Heart left ventricle (tissue), 16 donors: ENCODE measurements at regions of chr15 and their contacts with region 1.

Region 1: GRCh38 chr15:34490417-34491193 is 53.0 kb upstream of the GOLGA8A start:
- DNase-seq: no peak
- ATAC-seq: no peak
- H3K4me3 ChIP-seq: no peak overlapping the region
- H3K27ac ChIP-seq: no peak overlapping the region
- H3K4me1 ChIP-seq: peaks cover 0 to 15% (median 0%) of the 10 kb centered on the region in 12 donors
- H3K27me3 ChIP-seq: peaks cover 0 to 58% (median 16%) of the 10 kb centered on the region in 9 donors
- CTCF ChIP-seq: no peak
- POLR2A ChIP-seq: no peak

Region 2: GRCh38 chr15:34367101-34368081 is 123.2 kb before region 1 on chr15 and contains the start of gene LPCAT4:
- intact Hi-C with region 1: no loop called
- DNase-seq: peak; percentile 89 to 94 (median 92)
- ATAC-seq: peak; percentile 82 to 96 (median 90)
- H3K4me3 ChIP-seq: peak within 1 kb of the TSS; percentile 62 to 99 (median 88)
- H3K27ac ChIP-seq: peak within 1 kb of the TSS; percentile 91 to 100 (median 98)
- H3K4me1 ChIP-seq: peaks cover 0 to 25% (median 15%) of the 10 kb centered on the region in 12 donors
- H3K27me3 ChIP-seq: no peaks in the 10 kb centered on the region
- CTCF ChIP-seq: peak; percentile 86 to 99 (median 96)
- POLR2A ChIP-seq: peak in 1 of 2 donors; percentile 75
- total RNA-seq, gene LPCAT4: 9.8 to 80.0 (median 44.8) TPM

Region 3: GRCh38 chr15:34437687-34438086 is 52.9 kb before region 1 on chr15 and contains the start of gene GOLGA8A:
- intact Hi-C with region 1: loop called in 1 of 10 experiments (anchors 10 kb)
- DNase-seq: peak; percentile 60 to 89 (median 71)
- ATAC-seq: peak in 3 of 4 donors; percentile 66 to 75 (median 73)
- H3K4me3 ChIP-seq: peak within 1 kb of the TSS; percentile 44 to 89 (median 62)
- H3K27ac ChIP-seq: peak within 1 kb of the TSS in 5 of 12 donors; percentile 6 to 45 (median 30)
- H3K4me1 ChIP-seq: peaks cover 0 to 20% (median 4%) of the 10 kb centered on the region in 12 donors
- H3K27me3 ChIP-seq: peaks cover 0 to 9% (median 0%) of the 10 kb centered on the region in 9 donors
- CTCF ChIP-seq: no peak
- POLR2A ChIP-seq: no peak
- total RNA-seq, gene GOLGA8A: 1.1 to 21.6 (median 8.9) TPM

Region 4: DNA sequence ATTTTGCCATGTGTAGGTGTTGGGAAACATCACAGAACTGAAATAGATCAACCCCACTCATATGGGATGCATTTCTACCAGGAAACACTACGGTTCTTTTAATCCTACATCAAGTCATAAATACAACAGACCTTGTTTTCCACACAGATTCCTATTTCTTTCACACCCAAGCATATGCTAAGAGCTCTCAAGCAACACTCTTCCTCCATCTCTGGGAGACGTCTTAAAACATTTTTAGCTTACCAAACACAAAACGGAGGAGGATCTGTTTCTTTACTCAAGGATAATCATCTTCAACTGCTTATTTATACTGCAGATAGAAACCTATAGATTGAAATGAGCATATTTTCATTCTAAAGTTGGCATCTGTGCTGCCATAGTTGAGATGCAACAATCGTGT is 259.1 kb after region 1 on chr15:
- intact Hi-C with region 1: no loop called
- DNase-seq: no peak
- ATAC-seq: no peak
- H3K4me3 ChIP-seq: no peak overlapping the region
- H3K27ac ChIP-seq: no peak overlapping the region
- H3K4me1 ChIP-seq: peaks cover 0 to 8% (median 0%) of the 10 kb centered on the region in 12 donors
- H3K27me3 ChIP-seq: peaks cover 0 to 28% (median 13%) of the 10 kb centered on the region in 9 donors
- CTCF ChIP-seq: no peak
- POLR2A ChIP-seq: no peak